PC-3 (cell line): ENCODE measurements at regions of chr14 and their contacts with region 1.

Region 1: DNA sequence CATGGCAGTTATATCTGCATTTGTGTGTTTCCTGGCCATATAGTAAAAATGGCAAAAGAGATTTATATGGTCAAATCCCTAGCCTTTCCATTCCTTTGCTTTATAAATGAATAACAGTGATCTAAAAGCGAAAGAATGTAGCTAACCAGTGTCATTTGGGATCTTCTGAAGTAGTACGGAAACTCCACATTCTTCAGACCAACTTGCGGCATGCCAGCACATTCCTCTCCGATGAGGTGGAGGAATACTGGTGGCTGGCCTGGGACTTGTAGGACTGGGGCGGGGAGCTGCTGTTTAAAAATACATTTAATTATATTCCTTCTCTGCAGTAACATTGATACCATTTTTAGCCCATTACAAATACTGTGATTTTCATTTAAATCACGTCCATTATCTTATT is 85.3 kb downstream of the SAMD4A start:
- DNase-seq: peak; percentile 100
- ATAC-seq: peak; percentile 97
- H3K4me3 ChIP-seq: peak overlapping the region; percentile 45
- H3K27ac ChIP-seq: peak overlapping the region; percentile 90
- H3K4me1 ChIP-seq: peaks cover 62% of the 10 kb centered on the region
- H3K27me3 ChIP-seq: no peaks in the 10 kb centered on the region
- CTCF ChIP-seq: no peak

Region 2: GRCh38 chr14:54593860-54594259 is 58.3 kb before region 1 on chr14:
- CTCF ChIA-PET with region 1: no interaction called
- POLR2A ChIA-PET with region 1: no interaction called
- intact Hi-C with region 1: no loop called
- DNase-seq: peak; percentile 75
- ATAC-seq: peak; percentile 68
- H3K4me3 ChIP-seq: peak overlapping the region; percentile 8; the same call in 1 of the 2 replicates
- H3K27ac ChIP-seq: peak overlapping the region; percentile 47
- H3K4me1 ChIP-seq: peaks cover 68% of the 10 kb centered on the region
- H3K27me3 ChIP-seq: no peaks in the 10 kb centered on the region
- CTCF ChIP-seq: no peak

Region 3: GRCh38 chr14:54669721-54670561 is 17.8 kb after region 1 on chr14:
- CTCF ChIA-PET with region 1: no interaction called
- POLR2A ChIA-PET with region 1: interaction called, 3 read pairs
- intact Hi-C with region 1: loop called (anchors 1 kb)
- DNase-seq: peak; percentile 99
- ATAC-seq: peak; percentile 77
- H3K4me3 ChIP-seq: peak overlapping the region; percentile 34
- H3K27ac ChIP-seq: peak overlapping the region; percentile 81
- H3K4me1 ChIP-seq: peaks cover 56% of the 10 kb centered on the region
- H3K27me3 ChIP-seq: no peaks in the 10 kb centered on the region
- CTCF ChIP-seq: no peak

Region 4: GRCh38 chr14:54676812-54677708 is 24.9 kb after region 1 on chr14:
- CTCF ChIA-PET with region 1: no interaction called
- POLR2A ChIA-PET with region 1: interaction called, 6 read pairs
- intact Hi-C with region 1: loop called (anchors 1 kb)
- DNase-seq: peak; percentile 99
- ATAC-seq: peak; percentile 95
- H3K4me3 ChIP-seq: peak overlapping the region; percentile 46
- H3K27ac ChIP-seq: peak overlapping the region; percentile 80
- H3K4me1 ChIP-seq: peaks cover 49% of the 10 kb centered on the region
- H3K27me3 ChIP-seq: no peaks in the 10 kb centered on the region
- CTCF ChIP-seq: no peak

Region 5: GRCh38 chr14:54683882-54684794 is 31.9 kb after region 1 on chr14:
- CTCF ChIA-PET with region 1: no interaction called
- POLR2A ChIA-PET with region 1: interaction called, 8 read pairs
- intact Hi-C with region 1: loop called (anchors 1 kb)
- DNase-seq: peak; percentile 65
- ATAC-seq: peak; percentile 61
- H3K4me3 ChIP-seq: no peak overlapping the region
- H3K27ac ChIP-seq: peak overlapping the region; percentile 31
- H3K4me1 ChIP-seq: peaks cover 38% of the 10 kb centered on the region
- H3K27me3 ChIP-seq: no peaks in the 10 kb centered on the region
- CTCF ChIP-seq: no peak

Region 6: DNA sequence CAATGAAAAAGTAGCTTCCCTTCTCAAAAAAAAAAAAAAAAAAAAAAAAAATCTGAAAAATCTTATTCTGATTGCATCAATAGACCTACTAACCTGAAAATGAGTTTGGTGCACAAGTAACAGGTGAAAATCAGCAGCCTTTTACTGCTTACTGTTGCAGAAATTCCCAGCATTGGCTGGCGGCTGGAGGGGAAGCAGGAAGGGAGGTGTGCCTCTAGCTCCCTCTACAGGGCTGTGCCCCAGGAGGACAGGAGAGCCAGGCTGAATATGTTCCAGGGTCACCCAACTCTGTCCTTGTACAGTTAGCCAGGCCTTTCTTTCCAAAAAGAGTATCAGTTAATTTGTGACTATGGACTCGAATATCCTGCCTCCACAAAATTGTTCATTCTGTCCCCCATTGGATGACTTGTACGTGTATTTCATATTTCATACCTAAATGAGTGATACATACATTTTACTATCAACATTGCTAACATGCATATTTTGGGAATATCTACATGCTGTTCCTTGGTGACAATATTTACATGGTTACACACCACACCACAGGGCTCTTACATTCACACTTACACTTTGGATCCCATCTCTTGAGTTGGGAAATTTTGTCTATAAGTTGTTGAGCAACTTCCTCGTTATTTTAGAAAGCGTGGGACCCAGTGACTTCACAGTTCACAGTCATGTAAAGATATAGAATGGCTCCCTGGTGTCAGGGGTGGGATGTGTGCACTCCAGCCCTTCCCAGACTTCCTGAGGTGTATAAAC is 39.5 kb after region 1 on chr14:
- CTCF ChIA-PET with region 1: no interaction called
- POLR2A ChIA-PET with region 1: no interaction called
- intact Hi-C with region 1: loop called (anchors 1 kb)
- DNase-seq: peak; percentile 97
- ATAC-seq: peak; percentile 98
- H3K4me3 ChIP-seq: no peak overlapping the region
- H3K27ac ChIP-seq: peak overlapping the region; percentile 3; the same call in 1 of the 2 replicates
- H3K4me1 ChIP-seq: peaks cover 5% of the 10 kb centered on the region
- H3K27me3 ChIP-seq: no peaks in the 10 kb centered on the region
- CTCF ChIP-seq: peak; percentile 100

Region 7: GRCh38 chr14:54737132-54737711 is 85.0 kb after region 1 on chr14:
- CTCF ChIA-PET with region 1: no interaction called
- POLR2A ChIA-PET with region 1: interaction called, 3 read pairs
- intact Hi-C with region 1: loop called (anchors 5 kb)
- DNase-seq: peak; percentile 94
- ATAC-seq: peak; percentile 81
- H3K4me3 ChIP-seq: peak overlapping the region; percentile 50
- H3K27ac ChIP-seq: peak overlapping the region; percentile 91
- H3K4me1 ChIP-seq: peaks cover 37% of the 10 kb centered on the region
- H3K27me3 ChIP-seq: no peaks in the 10 kb centered on the region
- CTCF ChIP-seq: no peak